Dorsolateral prefrontal cortex (tissue), 120 donors: ENCODE measurements at regions of chr19 and their contacts with region 1.

Region 1: DNA sequence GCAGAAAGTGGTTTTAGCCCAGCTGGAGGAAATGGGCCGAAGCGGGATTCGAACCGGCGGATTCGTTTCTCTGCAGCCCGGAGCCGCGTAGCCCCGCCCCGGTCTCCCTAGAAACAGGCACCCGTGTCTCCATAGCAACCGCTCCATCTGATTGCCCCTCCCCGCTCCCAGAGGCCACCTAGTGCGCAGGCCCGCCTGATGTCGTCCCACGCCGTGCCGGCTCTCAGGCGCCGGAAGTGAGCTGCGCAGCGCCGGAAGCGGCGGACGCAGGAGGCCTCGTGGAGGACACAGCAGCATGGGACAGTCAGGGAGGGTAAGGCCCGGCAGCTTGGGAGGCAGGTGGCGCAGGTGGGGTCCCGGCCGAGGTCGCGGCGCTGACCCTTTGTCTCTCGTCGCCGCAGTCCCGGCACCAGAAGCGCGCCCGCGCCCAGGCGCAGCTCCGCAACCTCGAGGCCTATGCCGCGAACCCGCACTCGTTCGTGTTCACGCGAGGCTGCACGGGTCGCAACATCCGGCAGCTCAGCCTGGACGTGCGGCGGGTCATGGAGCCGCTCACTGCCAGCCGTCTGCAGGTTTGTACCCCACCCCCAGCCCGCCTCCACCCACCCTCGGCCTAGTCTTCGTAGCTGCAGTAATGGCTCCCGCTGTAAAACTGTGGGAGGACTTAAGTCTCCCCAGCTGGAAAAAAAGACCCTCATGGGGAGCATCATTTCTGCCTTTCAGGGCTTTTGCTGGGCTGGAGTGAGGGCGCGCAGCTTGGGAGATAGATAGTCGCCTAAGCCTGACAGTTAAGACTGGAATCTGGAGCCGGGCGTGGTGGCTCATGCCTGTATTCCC is at the start of gene PPAN:
- DNase-seq: peak; percentile 96 to 99 (median 98)
- H3K4me3 ChIP-seq: peak within 1 kb of the TSS; percentile 66 to 99 (median 89)
- H3K27ac ChIP-seq: peak within 1 kb of the TSS in 51 of 59 donors; percentile 9 to 92 (median 75)
- H3K27me3 ChIP-seq: no peaks in the 10 kb centered on the region
- CTCF ChIP-seq: peak in 44 of 56 donors; percentile 8 to 66 (median 40)
- total RNA-seq, gene PPAN: 32.9 to 65.3 (median 43.5) TPM

Region 2: DNA sequence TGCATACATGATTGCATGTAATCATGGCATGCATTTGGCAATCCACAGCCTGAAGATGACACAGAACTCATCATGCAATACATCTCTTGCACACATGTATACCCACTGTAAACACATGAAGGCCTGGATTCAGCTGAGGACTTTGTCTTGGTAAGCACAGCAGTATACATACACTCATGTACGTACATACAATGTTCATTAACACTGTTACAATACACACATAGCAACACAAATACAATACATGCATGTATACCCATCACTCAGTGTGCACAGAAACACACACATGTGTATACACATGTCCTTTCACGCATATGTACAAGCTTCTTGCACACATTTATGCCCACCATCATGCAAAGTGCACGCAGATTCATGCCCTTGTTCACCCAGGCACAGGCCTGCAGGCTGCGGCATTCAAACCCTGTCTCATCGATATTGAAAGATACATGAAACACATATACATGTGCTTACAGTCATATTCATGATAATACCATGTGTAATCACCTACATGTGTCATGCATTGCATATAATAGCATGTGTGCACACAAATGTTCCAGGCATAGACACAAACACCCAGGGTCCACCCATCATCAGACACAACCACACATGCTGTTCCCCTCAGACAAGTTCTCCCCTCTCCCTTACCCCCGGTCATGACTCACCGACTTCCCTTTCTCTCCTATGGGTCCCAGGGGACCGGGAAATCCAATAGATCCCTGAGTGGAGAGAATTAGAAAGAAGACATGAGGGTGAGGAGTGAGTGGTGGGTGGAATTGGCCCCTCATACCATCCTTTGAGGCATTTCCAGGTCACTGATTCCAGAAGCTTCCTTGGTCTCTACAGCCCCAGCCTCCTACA is 124.7 kb before region 1 on chr19:
- intact Hi-C with region 1: no loop called
- DNase-seq: no peak
- H3K4me3 ChIP-seq: peak overlapping the region in 32 of 59 donors; percentile 0 to 60 (median 29)
- H3K27ac ChIP-seq: peak overlapping the region in 11 of 59 donors; percentile 7 to 59 (median 32)
- H3K27me3 ChIP-seq: peaks cover 0 to 6% (median 0%) of the 10 kb centered on the region in 45 donors
- CTCF ChIP-seq: no peak

Region 3: DNA sequence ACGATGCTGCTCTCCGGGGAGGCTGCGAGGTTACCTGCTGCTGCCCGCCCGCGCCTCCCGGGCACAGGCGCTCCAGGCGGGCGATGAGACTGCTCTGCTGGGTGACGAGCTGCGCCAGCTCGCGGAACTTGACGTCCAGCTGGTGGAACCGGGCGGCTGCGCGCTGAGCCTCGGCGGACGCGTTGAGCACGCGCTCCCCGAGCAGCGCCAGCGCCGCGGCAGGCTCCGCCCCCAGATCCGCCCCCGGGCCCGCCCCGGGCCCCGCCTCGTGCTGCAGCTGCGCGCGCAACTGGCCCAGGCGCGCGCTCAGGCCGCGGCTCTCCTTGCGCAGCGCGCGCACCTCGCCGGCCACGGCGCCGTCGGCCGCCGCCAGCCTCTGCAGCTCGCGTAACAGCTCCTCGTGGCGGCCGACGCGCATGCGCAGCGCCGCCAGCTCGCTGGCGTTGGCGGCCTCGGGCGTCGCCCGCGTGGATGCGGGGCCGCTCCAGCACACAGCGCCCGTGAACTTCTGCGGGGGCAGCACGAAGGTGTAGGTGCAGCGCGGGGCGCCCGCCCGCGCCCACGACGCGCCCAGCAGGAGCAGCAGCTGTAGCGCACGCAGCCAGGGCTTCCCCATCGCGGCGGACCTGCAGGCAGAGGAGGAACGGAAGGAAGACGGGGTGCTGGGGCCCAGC is 10.2 kb before region 1 on chr19:
- intact Hi-C with region 1: loop called in 1 of 2 experiments (anchors 1 kb)
- DNase-seq: peak; percentile 65 to 92 (median 86)
- H3K4me3 ChIP-seq: peak overlapping the region; percentile 25 to 78 (median 63)
- H3K27ac ChIP-seq: peak overlapping the region in 58 of 59 donors; percentile 60 to 96 (median 87)
- H3K27me3 ChIP-seq: no peaks in the 10 kb centered on the region
- CTCF ChIP-seq: peak in 10 of 56 donors; percentile 3 to 39 (median 12)

Region 4: DNA sequence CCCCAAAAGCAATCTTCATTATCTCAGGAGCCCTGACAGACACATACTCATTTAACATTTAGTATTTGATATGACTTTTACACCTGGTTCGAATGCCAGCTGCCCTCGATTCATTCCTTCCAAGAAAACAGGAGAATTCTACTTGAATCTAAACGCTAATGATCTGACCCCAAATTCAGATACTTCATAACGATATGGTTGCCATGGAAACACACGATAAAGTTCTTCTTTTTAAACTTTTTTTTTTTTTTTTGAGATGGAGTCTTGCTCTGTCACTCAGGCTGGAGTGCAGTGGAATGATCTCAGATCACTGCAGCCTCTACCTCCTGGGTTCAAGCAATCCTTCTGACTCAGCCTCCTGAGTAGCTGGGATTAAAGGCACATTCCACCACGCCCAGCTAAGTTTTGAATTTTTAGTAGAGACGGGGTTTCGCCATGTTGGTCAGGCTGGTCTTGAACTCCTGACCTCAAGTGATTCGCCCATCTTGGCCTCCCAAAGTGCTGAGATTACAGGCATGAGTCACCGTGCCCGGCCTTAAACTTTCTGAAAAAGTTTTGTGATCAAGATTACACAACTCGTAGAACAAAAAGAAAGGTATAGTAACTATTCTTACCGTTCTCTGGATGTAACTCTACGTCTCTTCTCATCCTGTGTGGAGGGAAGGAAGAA is 67.1 kb after region 1 on chr19:
- intact Hi-C with region 1: no loop called
- DNase-seq: no peak
- H3K4me3 ChIP-seq: no peak overlapping the region
- H3K27ac ChIP-seq: no peak overlapping the region
- H3K27me3 ChIP-seq: no peaks in the 10 kb centered on the region
- CTCF ChIP-seq: no peak

Region 5: DNA sequence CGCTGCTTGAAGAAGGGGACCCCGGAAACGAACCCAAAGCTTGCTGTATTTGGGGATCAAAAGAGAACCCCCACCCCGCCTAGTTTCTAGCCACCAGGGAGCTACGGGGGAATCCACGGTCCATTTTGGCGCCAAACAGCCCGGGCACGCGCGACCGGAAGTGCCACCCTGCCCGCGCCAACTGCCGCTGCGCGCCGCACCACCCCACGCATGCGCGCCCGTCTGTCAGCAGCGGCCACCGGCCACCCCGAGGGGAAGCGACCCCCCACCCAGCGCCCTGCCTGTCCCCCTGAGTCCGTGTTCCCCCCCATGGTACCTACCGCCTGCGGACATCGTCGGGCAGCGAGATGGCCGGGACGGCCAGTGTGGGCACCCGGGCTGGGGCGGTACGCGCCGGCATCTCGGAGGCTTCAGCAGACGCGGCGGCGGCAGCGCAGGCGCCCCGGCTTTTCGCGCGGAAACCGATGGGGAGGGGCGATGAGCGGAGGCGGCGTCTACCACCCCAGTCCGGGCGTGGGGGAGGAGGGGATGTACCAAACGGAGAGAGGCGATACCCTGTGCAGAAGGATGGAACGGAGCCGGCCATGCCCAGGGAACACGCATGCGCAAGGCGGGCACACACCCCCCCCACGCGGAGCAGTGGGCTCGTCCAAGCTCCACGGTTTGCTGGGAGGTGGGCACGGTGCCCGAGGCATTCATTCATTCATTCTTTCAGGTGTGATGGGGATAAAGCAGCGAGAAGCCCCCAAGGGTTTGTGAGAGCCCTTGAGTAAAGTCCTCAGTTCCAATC is 88.4 kb after region 1 on chr19 and contains the start of gene DNMT1:
- intact Hi-C with region 1: loop called in 1 of 2 experiments (anchors 5 kb)
- DNase-seq: peak; percentile 93 to 98 (median 96)
- H3K4me3 ChIP-seq: peak within 1 kb of the TSS; percentile 64 to 96 (median 88)
- H3K27ac ChIP-seq: peak within 1 kb of the TSS; percentile 66 to 98 (median 92)
- H3K27me3 ChIP-seq: no peaks in the 10 kb centered on the region
- CTCF ChIP-seq: peak in 29 of 56 donors; percentile 3 to 50 (median 16)
- total RNA-seq, gene DNMT1: 44.4 to 105 (median 67.2) TPM

Region 6: GRCh38 chr19:10332955-10333757 is 226.8 kb after region 1 on chr19 and contains the start of gene RAVER1:
- intact Hi-C with region 1: loop called in 1 of 2 experiments (anchors 10 kb)
- DNase-seq: peak; percentile 95 to 99 (median 98)
- H3K4me3 ChIP-seq: peak within 1 kb of the TSS; percentile 64 to 93 (median 83)
- H3K27ac ChIP-seq: peak within 1 kb of the TSS; percentile 76 to 99 (median 95)
- H3K27me3 ChIP-seq: no peaks in the 10 kb centered on the region
- CTCF ChIP-seq: peak in 14 of 56 donors; percentile 1 to 55 (median 16)
- total RNA-seq, gene RAVER1: 14.3 to 30.3 (median 19.9) TPM

Region 7: DNA sequence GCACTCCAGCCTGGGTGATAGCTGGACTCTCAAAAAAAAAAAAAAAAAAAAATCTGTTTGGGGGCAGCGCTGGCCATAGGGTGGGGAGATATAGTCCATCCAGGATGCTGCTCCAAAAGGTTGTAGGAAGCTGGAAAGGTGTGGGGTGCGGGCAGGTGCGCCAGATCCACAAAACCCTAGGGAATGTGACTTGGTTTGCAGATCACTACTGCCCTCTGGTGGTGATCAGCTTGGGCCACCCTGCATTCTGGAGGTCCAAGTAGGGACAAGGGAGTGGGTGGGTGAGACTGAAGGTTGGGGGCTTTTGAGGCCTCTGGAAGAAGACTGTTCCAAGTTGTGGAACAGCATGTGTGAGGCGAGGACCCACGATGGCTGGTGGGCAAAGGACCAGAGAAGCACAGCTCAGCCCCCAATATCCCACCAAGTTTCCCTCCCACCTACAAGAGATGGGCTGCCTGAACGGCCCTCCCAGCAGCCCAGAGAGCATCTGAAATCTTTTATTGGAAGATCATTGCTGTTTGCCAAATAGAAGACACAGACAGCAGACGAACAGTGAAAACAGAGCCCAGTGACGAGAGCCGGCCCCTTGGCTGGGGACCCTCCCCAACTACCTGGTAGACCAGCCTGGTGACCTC is 284.5 kb after region 1 on chr19:
- intact Hi-C with region 1: loop called in 1 of 2 experiments (anchors 10 kb)
- DNase-seq: peak in 9 of 10 donors; percentile 44 to 81 (median 69)
- H3K4me3 ChIP-seq: no peak overlapping the region
- H3K27ac ChIP-seq: no peak overlapping the region
- H3K27me3 ChIP-seq: no peaks in the 10 kb centered on the region
- CTCF ChIP-seq: peak; percentile 53 to 91 (median 82)